Common myeloid progenitor, CD34-positive (primary cell): ENCODE measurements at regions of chr18 and their contacts with region 1.

Region 1: DNA sequence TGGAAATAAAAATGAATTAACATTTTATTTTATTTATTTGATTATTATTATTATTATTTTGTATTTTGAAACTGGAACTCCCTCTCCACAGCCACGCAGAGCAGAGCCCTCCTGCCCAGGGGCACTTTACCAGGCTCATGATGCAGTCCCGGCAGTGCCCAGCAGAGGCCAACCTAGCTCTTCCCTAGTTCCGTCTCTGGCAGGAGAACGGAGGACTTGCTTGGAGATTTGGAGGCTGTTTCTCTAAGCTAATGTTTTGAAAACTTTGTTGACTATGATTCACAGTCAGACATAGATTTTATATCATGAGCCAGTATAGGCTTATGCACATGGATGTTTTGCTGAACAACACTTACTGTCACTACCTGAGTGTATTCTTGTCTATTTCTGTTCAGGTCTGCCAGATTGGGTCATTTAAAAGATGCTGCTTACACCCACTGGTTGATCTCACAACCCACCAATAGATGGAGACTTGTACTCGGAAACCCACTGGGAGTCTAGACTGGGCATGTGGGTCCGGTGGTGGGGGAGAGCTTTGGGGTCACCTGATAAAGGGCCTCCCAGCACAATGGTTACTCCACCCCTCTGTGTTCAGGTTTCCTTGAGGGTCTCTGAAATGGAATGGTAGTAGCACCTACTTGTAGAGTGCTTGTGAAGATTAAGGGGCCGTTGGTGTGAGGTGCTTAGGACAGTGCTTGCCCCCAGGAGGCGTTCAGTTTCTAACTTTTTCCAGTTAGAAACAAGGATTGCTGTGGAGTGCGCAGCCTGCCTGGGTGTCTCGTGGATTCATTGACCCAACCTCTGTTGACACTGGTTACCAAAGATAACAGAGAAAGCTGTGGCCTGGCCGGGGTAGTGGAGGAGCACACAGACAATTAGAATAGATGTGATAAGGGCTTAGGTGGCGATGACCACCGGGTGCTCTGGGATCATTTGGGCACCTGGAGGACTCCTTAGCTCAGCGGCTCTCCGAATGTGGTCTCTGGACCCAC is 177.3 kb downstream of the HAUS1 start:
- DNase-seq: peak; percentile 66 to 83 (median 79)
- H3K4me3 ChIP-seq: no peak overlapping the region
- H3K27ac ChIP-seq: no peak overlapping the region
- H3K4me1 ChIP-seq: peaks cover 0 to 8% (median 2%) of the 10 kb centered on the region in 4 experiments
- H3K27me3 ChIP-seq: peaks cover 0 to 2% (median 0%) of the 10 kb centered on the region in 5 experiments

Region 2: GRCh38 chr18:45774065-45774521 is 507.4 kb before region 1 on chr18:
- CTCF ChIA-PET with region 1: no interaction called
- POLR2A ChIA-PET with region 1: no interaction called
- DNase-seq: peak in 2 of 3 donors; percentile 32 to 44
- H3K4me3 ChIP-seq: peak overlapping the region in 1 of 7 experiments; percentile 1
- H3K27ac ChIP-seq: no peak overlapping the region
- H3K4me1 ChIP-seq: peaks cover 4 to 22% (median 16%) of the 10 kb centered on the region in 4 experiments
- H3K27me3 ChIP-seq: no peaks in the 10 kb centered on the region

Region 3: DNA sequence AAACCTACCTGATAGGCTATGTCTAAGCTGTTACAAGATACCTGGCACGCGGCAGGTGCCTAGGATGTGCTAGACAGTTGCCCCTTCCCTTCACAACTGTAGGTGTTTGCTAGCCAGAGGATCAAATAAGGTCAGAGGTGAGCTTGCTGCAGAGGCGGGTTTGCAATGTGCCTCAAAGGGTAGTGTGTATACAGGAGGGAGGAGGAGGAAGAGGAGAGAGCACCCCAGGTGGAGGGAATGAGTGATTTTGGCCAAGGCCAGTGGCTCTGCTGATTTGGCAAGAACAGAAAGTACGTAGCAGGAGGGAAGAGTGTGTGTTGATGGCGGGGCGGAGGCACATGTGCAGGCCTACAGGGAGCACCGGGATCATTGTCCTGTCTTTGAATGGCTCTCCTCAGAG is 59.2 kb after region 1 on chr18:
- CTCF ChIA-PET with region 1: interaction called, 10 read pairs
- POLR2A ChIA-PET with region 1: no interaction called
- DNase-seq: no peak
- H3K4me3 ChIP-seq: no peak overlapping the region
- H3K27ac ChIP-seq: no peak overlapping the region
- H3K4me1 ChIP-seq: peaks cover 4 to 69% (median 39%) of the 10 kb centered on the region in 4 experiments
- H3K27me3 ChIP-seq: peaks cover 0 to 25% (median 10%) of the 10 kb centered on the region in 5 experiments

Region 4: GRCh38 chr18:46481048-46481846 is 199.8 kb after region 1 on chr18:
- CTCF ChIA-PET with region 1: interaction called, 112 read pairs
- POLR2A ChIA-PET with region 1: no interaction called
- DNase-seq: peak; percentile 59 to 82 (median 76)
- H3K4me3 ChIP-seq: no peak overlapping the region
- H3K27ac ChIP-seq: no peak overlapping the region
- H3K4me1 ChIP-seq: no peaks in the 10 kb centered on the region
- H3K27me3 ChIP-seq: peaks cover 0 to 39% (median 6%) of the 10 kb centered on the region in 5 experiments

Region 5: GRCh38 chr18:46622999-46623398 is 341.5 kb after region 1 on chr18:
- CTCF ChIA-PET with region 1: interaction called, 33 read pairs
- POLR2A ChIA-PET with region 1: no interaction called
- DNase-seq: peak; percentile 25 to 41 (median 40)
- H3K4me3 ChIP-seq: no peak overlapping the region
- H3K27ac ChIP-seq: no peak overlapping the region
- H3K4me1 ChIP-seq: peaks cover 5 to 42% (median 21%) of the 10 kb centered on the region in 4 experiments
- H3K27me3 ChIP-seq: no peaks in the 10 kb centered on the region